ENCODE measurements at regions of chr3 and their contacts with region 1.

Region 1: DNA sequence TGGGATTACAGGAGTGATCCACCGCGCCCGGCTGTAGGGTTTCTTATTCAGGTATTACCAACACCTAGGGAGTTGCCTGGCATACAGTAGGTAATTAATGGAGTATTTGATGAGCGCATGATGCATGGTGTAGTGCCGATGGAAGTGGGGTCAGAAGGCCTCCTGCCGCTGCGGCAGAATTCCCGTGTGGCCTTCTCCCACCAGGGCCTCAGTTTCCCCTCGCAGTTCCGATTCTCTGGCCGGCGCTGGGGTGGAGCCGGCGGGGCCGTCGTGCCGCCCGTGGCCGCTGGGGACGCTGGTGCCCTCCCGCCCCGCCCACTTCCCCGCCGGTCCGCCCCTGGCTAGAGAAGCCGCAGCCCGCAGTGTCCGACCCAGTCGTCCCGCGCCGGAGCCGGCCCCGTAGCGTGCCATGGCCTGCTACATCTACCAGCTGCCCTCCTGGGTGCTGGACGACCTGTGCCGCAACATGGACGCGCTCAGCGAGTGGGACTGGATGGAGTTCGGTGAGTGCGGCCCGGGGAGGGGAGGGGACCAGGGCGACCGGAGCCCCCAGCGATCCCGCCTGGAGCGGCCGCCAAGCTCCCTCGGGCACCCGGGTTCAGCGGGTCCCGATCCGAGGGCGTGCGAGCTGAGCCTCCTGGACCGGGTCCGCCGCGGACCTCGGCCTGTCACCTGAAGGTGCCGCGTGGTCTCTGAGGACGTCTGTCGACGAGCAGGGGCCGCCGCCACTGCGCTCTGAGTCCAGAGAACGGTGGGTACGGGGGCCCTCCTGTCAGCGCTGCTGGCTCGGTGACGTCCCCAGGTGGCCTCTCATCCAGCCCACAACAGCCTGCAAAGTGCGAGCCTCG is at the start of gene IRAK2:
- DNase-seq: peak; percentile 61 to 69
- ATAC-seq: peak; percentile 90 to 91
- H3K4me3 ChIP-seq: peak within 1 kb of the TSS; percentile 87 to 100 (median 90)
- H3K27ac ChIP-seq: peak within 1 kb of the TSS; percentile 80 to 95 (median 88)
- H3K4me1 ChIP-seq: peaks cover 3 to 6% of the 10 kb centered on the region in 2 donors
- H3K27me3 ChIP-seq: no peaks in the 10 kb centered on the region
- CTCF ChIP-seq: peak; percentile 86 to 99 (median 90)
- POLR2A ChIP-seq: peak; percentile 67 to 79
- total RNA-seq, gene IRAK2: 21.9 to 42.0 (median 25.8) TPM

Region 2: DNA sequence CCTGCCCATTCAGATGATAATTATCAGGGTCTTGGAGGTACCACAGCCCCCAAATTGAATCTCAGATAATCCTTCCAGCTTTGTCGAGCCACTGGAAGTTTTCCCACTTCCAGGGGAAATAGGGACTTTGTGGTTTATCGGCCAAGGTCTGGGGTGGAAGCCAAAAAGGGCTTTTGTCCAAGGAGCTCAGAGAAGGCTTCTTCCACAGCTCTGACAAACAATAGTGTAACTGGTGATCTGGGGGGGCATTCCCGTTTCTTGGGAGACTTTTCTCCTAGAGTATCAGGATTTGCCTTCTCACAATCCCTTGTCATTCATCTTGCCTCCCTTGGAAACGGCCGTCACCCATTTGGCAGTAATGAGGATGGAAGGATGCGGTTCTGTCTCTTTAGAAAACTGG is 933.8 kb before region 1 on chr3:
- in situ Hi-C with region 1: no loop called
- intact Hi-C with region 1: no loop called
- DNase-seq: no peak
- ATAC-seq: no peak
- H3K4me3 ChIP-seq: no peak overlapping the region
- H3K27ac ChIP-seq: no peak overlapping the region
- H3K4me1 ChIP-seq: peaks cover 10 to 11% of the 10 kb centered on the region in 2 donors
- H3K27me3 ChIP-seq: no peaks in the 10 kb centered on the region
- CTCF ChIP-seq: no peak
- POLR2A ChIP-seq: no peak

Region 3: DNA sequence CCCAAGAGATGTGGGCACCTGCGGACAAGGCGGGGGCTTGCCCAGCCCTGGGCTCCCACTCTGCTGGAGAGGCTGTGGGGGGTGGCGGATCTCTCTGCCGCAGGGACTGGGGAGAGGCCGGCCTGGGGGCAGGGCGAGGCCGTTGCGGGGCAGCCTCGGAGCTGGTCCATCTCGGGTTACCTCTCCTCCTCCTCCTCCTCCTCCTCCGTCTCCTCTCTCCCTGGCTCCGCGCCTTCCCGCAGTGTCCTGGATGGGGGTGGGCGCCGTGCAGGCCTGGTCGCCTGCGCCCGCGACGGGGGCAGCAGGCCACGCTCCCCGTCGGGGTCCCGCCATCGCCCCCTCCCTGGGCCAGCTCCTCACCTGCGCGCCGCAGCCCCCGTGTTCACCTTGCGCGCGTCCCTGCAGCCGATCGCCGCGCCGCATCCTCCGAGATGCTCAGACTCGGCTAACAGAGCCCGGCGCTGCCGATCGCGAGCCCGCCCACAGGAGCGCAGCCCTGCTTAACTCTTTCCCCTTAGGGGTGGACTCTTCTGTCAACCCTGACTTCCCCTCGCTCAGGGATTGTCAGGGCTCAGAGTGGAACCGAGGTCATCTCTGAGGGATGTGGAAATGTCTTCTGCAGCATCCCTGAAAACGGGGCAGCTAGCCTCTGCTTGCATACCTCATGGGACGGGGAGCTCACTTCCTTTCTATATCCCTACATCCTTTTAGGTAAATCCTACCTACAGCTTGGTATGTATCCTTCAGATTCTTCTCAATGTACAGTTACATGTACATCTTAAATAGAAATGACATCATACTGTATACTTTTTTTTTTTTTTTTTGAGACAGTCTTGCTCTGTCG is 212.6 kb before region 1 on chr3 and contains the start of gene PRRT3:
- in situ Hi-C with region 1: no loop called
- intact Hi-C with region 1: no loop called
- DNase-seq: peak in 1 of 2 donors; percentile 35
- ATAC-seq: peak in 1 of 2 donors; percentile 15
- H3K4me3 ChIP-seq: peak within 1 kb of the TSS; percentile 29 to 74 (median 48)
- H3K27ac ChIP-seq: peak within 1 kb of the TSS in 3 of 4 donors; percentile 4 to 19 (median 8)
- H3K4me1 ChIP-seq: peaks cover 25 to 29% of the 10 kb centered on the region in 2 donors
- H3K27me3 ChIP-seq: no peaks in the 10 kb centered on the region
- CTCF ChIP-seq: no peak
- POLR2A ChIP-seq: no peak
- total RNA-seq, gene PRRT3: 0.92 to 7.4 (median 2.5) TPM

Region 4: DNA sequence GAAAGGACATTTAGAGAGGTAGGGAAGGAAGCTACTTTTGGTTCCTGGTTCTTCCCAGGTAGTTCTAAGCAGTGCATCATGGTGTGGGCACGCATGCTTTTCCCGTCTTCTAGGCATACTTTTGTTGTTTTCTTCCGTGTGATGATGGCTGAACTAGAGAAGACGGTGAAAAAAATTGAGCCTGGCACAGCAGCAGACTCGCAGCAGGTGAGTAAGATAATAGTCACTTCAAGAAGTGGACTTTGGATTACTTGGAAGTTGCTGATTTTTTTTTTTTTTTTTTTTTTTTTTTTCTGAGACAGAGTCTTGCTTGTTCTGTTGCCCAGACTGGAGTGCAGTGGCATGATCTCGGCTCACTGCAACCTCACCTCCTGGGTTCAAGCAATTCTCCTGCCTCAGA is 74.6 kb before region 1 on chr3:
- in situ Hi-C with region 1: no loop called
- intact Hi-C with region 1: no loop called
- DNase-seq: no peak
- ATAC-seq: no peak
- H3K4me3 ChIP-seq: no peak overlapping the region
- H3K27ac ChIP-seq: no peak overlapping the region
- H3K4me1 ChIP-seq: no peaks in the 10 kb centered on the region
- H3K27me3 ChIP-seq: no peaks in the 10 kb centered on the region
- CTCF ChIP-seq: no peak
- POLR2A ChIP-seq: no peak

Region 5: GRCh38 chr3:10142707-10143566 is 21.8 kb before region 1 on chr3:
- in situ Hi-C with region 1: no loop called
- intact Hi-C with region 1: loop called (anchors 2 kb)
- DNase-seq: peak in 1 of 2 donors; percentile 22
- ATAC-seq: no peak
- H3K4me3 ChIP-seq: peak overlapping the region; percentile 75 to 86 (median 81)
- H3K27ac ChIP-seq: peak overlapping the region; percentile 89 to 93 (median 92)
- H3K4me1 ChIP-seq: peaks cover 22 to 36% of the 10 kb centered on the region in 2 donors
- H3K27me3 ChIP-seq: no peaks in the 10 kb centered on the region
- CTCF ChIP-seq: no peak
- POLR2A ChIP-seq: no peak

Region 6: DNA sequence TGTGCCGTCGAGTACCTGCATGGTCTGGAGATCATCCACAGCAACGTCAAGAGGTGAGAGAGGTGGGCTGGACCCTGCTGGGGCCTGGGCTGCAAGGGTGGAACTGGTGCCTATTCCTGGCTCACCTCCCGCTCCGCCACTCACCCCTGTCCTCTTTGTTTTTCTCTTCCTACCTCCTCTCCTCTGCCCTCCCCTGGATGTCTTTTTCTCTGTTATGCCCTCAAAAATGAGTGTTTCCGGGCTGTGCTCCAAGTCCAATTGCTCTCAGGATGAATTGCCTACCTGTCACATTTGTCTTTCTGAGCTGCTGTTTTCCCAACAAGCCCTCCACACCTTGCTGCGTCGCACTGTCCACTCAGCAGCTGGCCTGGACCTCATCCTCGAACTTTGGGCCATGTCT is 55.0 kb after region 1 on chr3:
- in situ Hi-C with region 1: loop called in 3 of 4 experiments (anchors 5 to 10 kb)
- intact Hi-C with region 1: no loop called
- DNase-seq: no peak
- ATAC-seq: no peak
- H3K4me3 ChIP-seq: no peak overlapping the region
- H3K27ac ChIP-seq: no peak overlapping the region
- H3K4me1 ChIP-seq: peaks cover 0 to under 1% of the 10 kb centered on the region in 2 donors
- H3K27me3 ChIP-seq: no peaks in the 10 kb centered on the region
- CTCF ChIP-seq: no peak
- POLR2A ChIP-seq: no peak

Region 7: DNA sequence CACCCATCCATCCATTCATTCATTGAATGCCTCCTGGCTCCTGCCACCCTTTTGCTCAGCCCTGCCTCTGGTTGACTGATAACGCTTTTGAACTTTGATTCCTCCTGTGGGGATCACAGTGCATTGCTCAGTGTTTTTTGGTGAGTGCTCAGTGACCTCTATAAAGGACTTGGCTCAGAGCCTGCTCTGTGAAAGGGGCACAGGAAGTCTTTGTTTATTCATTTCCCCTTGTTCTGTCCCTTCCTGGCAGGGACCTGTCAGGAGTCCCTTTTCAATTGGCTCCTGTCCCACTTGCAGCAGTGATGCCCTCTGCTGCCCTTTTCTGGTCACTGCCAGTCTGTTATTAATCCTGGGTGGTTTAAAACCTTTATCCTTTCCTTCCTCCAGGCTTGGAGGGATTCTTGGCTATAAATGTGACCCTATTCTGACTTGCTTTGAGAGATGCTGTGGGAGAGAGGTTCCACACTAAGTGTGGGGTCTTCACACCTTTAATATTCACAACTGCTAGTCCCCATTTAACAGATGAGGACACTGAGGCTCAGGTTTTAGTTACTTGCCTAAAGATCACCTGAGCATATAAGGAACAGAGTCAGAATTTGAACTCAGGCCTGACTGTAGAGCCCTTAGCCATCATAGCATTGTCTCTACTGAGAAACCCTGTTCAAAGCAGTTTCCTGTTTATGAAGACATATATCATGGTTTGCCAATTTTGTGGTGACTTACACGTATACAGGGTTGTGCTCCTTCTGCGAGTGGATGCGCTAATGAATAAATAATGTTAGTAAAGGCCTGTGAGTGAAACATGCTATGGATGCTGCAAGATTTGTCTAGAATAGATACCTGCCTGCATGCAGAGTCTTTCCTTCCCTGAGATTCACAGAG is 60.3 kb after region 1 on chr3:
- in situ Hi-C with region 1: loop called in 3 of 4 experiments (anchors 5 to 10 kb)
- intact Hi-C with region 1: loop called (anchors 1 kb)
- DNase-seq: peak; percentile 66 to 81
- ATAC-seq: peak; percentile 89 to 95
- H3K4me3 ChIP-seq: no peak overlapping the region
- H3K27ac ChIP-seq: peak overlapping the region in 3 of 4 donors; percentile 11 to 64 (median 45)
- H3K4me1 ChIP-seq: peaks cover 0 to 5% of the 10 kb centered on the region in 2 donors
- H3K27me3 ChIP-seq: no peaks in the 10 kb centered on the region
- CTCF ChIP-seq: peak; percentile 77 to 90 (median 85)
- POLR2A ChIP-seq: no peak

Measured in gastrocnemius medialis (tissue), 4 donors.